ENCODE measurements at regions of chr5 and their contacts with region 1.

Region 1: GRCh38 chr5:142145106-142145900 is 36.7 kb downstream of the NDFIP1 start:
- DNase-seq: peak in 4 of 10 donors; percentile 39 to 75 (median 58)
- H3K4me3 ChIP-seq: no peak overlapping the region
- H3K27ac ChIP-seq: peak overlapping the region in 12 of 59 donors; percentile 1 to 56 (median 20)
- H3K27me3 ChIP-seq: no peaks in the 10 kb centered on the region
- CTCF ChIP-seq: peak; percentile 45 to 81 (median 68)

Region 2: DNA sequence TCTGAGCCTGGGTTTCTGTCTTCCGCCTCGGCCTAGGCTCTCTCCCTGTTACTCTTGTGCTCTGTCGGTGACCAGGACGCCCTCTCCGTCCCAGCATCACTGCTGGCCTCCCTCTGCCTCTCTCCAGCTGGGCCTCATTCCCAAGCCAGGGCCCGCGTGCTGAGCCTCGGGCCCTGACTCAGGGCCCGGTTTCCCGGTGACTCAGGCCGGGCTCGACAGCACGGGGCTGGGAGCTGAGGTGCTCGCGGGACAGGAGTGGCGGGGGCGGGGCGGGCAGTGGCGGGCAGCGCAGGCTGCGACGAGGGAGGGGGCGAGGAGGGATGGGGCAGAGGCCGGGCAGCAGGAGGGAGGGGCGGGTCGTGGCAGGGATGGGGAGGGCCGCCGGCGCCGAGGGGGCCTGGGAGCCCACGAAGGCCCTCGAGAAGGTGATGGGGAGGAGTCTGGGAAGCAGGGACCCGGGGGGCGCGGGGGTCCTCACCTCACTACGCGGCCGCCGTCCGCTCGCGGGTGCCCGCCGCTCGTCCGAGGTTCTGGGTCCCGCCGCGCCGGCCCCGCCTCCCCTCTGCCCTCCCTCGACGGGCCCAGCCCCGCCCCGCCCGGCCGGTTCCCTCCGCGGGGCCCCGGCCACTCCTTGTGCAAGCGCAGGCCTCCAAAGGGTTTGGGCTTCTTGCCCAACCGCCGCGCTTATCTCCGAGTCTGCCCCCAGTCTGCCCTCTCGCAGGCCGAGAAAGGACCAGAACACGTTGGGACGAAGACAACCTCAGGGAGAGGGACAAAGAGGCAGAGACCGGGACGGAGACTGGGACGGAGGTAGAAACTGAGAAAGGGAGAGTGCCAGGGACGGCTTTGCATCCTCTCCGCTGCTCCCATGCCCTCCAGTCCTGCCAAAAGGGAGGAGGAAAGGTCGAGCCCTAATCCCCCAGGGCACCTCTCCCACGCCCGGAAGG is 463.3 kb before region 1 on chr5 and contains the start of gene ARAP3:
- intact Hi-C with region 1: loop called in 1 of 2 experiments (anchors 10 kb)
- DNase-seq: peak in 2 of 10 donors; percentile 43 to 50
- H3K4me3 ChIP-seq: peak within 1 kb of the TSS in 58 of 59 donors; percentile 14 to 65 (median 50)
- H3K27ac ChIP-seq: peak within 1 kb of the TSS in 42 of 59 donors; percentile 14 to 82 (median 56)
- H3K27me3 ChIP-seq: no peaks in the 10 kb centered on the region
- CTCF ChIP-seq: no peak
- total RNA-seq, gene ARAP3: 3.8 to 24.9 (median 10.5) TPM

Region 3: GRCh38 chr5:141992349-141992963 is 152.8 kb before region 1 on chr5:
- intact Hi-C with region 1: loop called (anchors 1 to 5 kb)
- DNase-seq: peak in 7 of 10 donors; percentile 54 to 92 (median 70)
- H3K4me3 ChIP-seq: no peak overlapping the region
- H3K27ac ChIP-seq: peak overlapping the region in 2 of 59 donors; percentile 15 to 60
- H3K27me3 ChIP-seq: no peaks in the 10 kb centered on the region
- CTCF ChIP-seq: peak; percentile 70 to 95 (median 87)

Region 4: GRCh38 chr5:142012792-142013388 is 132.4 kb before region 1 on chr5 and contains the start of gene GNPDA1:
- intact Hi-C with region 1: loop called (anchors 5 kb)
- DNase-seq: peak; percentile 69 to 92 (median 76)
- H3K4me3 ChIP-seq: peak within 1 kb of the TSS; percentile 70 to 97 (median 86)
- H3K27ac ChIP-seq: peak within 1 kb of the TSS; percentile 83 to 99 (median 96)
- H3K27me3 ChIP-seq: no peaks in the 10 kb centered on the region
- CTCF ChIP-seq: peak in 21 of 56 donors; percentile 8 to 55 (median 29)
- total RNA-seq, gene GNPDA1: 20.5 to 56.1 (median 37.9) TPM

Region 5: DNA sequence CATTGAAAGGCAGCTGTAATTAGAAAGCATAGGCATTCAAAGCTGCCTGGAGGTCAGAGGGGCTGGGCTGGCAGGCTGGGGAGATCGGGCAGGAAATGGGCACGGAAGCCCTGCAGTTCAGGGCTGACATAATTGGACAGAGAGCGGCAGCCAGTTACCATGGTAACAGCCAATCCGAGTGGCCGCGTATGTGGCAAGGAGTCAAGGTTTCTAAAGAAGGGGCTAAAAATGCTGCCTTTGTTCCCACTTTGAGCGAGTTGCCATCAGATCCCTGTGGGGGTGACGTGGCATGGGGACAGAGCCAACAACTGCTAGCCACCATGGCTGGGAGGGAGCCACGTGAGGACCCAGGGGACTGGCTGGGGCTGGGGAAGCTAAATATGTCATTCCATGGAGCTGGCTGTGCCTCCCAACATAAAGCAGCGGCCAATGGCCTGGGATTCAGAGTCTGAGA is 81.4 kb before region 1 on chr5:
- intact Hi-C with region 1: loop called in 1 of 2 experiments (anchors 5 kb)
- DNase-seq: peak; percentile 95 to 99 (median 97)
- H3K4me3 ChIP-seq: peak overlapping the region in 49 of 59 donors; percentile 1 to 55 (median 30)
- H3K27ac ChIP-seq: peak overlapping the region; percentile 86 to 99 (median 97)
- H3K27me3 ChIP-seq: no peaks in the 10 kb centered on the region
- CTCF ChIP-seq: peak in 11 of 56 donors; percentile 3 to 30 (median 18)

Region 6: DNA sequence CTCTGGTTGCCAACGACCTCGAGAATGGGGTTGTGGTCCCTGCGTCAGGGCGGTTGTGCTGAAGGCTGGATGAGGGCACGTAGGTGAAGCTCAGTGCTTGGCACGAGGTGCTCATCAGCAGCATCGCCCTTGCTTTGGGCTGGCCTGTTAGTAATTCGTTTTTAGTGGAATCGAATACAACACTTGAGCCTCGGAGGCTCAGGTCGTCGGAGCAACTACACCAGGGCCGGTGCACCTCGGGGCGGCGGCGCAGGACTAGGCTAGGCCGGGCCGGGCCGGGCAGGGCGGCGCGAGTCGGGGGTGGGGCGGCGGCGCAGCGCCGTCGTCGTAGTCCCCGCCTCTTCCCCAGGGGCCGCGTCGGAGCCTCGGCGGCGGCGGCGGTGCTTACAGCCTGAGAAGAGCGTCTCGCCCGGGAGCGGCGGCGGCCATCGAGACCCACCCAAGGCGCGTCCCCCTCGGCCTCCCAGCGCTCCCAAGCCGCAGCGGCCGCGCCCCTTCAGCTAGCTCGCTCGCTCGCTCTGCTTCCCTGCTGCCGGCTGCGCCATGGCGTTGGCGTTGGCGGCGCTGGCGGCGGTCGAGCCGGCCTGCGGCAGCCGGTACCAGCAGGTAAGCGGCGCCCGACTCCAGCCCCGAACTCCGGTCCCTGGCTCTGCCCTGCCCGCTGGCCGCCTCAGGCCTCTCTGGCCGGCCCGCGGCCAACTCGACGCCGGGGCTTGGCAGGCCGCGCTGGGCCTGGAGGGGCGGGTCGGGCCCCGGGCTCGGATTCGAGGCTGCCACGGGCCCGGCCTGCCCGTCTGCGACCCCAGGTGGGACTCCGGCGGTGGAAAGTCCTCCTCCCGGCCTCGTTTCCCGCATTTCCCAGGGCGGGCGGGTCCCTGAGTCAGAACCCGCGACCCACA is 36.6 kb before region 1 on chr5 and contains the start of gene NDFIP1:
- intact Hi-C with region 1: loop called in 1 of 2 experiments (anchors 5 kb)
- DNase-seq: peak; percentile 63 to 90 (median 75)
- H3K4me3 ChIP-seq: peak within 1 kb of the TSS; percentile 54 to 97 (median 85)
- H3K27ac ChIP-seq: peak within 1 kb of the TSS; percentile 87 to 100 (median 98)
- H3K27me3 ChIP-seq: no peaks in the 10 kb centered on the region
- CTCF ChIP-seq: peak in 39 of 56 donors; percentile 5 to 63 (median 29)
- total RNA-seq, gene NDFIP1: 89.7 to 309 (median 217) TPM

Region 7: DNA sequence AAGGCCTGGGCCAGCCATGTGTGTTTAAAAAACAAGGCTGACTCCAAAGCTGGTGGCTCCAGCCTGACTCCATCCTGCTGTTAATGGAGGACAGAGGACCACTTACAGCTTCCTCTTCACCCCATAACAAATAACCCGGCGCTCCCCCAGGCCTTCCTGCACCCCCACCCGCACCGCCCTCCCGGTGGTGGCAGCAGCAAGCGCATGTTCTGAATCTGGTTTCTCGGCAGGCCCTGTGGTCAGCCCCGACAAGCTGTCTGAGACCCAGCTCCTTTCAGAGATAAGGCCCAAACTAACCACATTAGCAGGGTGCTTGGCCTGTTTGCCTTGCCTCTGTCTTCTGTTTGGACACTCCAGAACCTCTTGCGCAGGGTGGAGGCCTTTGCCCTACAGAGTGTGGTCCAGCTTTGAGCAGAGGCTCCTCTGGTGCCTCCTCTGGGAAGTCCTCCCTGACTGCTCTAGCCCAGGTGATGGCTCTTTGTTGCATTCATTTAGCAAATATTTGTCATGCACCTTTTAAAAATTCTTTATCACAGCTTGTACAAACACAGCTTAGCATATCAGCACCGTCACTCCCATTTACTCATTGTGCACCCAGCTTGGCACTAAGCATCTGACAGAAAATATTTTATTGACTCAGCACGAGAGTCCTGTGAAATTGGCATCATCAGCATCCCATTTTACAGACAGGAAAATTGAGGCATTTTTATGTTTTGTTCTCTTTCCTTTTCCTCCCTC is 41.7 kb after region 1 on chr5:
- intact Hi-C with region 1: no loop called
- DNase-seq: no peak
- H3K4me3 ChIP-seq: no peak overlapping the region
- H3K27ac ChIP-seq: no peak overlapping the region
- H3K27me3 ChIP-seq: peaks cover 0 to 3% (median 0%) of the 10 kb centered on the region in 45 donors
- CTCF ChIP-seq: no peak

Region 8: DNA sequence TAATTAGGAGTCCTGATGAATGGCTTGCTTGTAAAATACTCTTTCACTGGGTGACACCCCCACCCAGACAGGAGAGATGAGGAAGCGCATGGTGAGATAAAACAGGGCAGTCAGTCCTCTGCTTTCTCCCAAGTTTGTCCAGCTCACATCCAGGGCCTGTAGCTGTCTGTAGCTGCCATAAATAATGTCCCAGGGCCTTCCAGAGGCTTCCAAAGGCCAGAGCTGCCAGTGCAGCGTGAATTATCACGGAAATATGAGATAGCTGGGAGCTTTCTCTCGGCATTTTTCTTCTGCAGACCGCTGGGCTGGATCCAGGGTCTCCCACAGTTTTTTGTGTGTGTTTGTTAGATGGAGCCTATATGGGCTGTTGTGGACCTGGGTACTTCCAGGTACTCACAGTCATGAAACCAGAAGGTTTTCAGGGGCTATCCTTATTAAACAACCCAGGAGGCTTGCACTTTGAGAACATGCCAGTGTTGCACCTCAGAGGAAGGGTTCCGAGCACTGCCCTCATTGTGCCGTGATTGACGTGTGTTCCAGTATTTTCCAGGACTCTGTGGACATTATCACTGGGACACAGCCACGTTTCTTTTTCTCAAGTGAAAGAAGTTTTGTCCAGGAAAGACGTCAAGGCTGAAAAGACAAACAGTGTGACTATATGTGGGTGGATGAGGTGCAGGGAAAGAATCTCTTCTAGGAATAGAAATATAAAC is 423.1 kb after region 1 on chr5:
- intact Hi-C with region 1: no loop called
- DNase-seq: no peak
- H3K4me3 ChIP-seq: no peak overlapping the region
- H3K27ac ChIP-seq: peak overlapping the region in 23 of 59 donors; percentile 9 to 75 (median 36)
- H3K27me3 ChIP-seq: no peaks in the 10 kb centered on the region
- CTCF ChIP-seq: no peak